ENCODE measurements at regions of chr3 and their contacts with region 1.

Region 1: DNA sequence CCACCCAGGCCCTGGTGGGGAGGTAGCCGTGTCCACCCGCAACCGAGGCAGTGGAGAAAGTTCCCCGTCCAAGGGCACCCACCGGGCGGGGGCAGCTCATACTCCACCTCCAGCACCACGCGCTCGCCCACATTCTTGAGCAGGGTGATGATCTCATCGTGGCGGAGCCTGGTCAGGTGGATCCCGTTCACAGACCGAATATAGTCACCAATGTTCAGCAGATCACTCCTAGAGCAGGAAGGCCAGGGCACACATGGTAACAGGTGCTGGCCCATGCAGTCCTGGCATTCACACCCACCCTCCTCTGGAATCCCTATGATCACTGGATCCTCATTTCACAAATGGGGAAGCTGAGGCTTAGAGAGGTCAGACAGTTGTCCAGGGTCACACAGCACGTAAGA is 15.8 kb downstream of the GRIP2 start:
- DNase-seq: peak; percentile 90 to 96
- ATAC-seq: peak; percentile 68 to 76
- H3K4me3 ChIP-seq: no peak overlapping the region
- H3K27ac ChIP-seq: peak overlapping the region; percentile 92 to 99 (median 97)
- H3K4me1 ChIP-seq: peaks cover 62 to 69% of the 10 kb centered on the region in 2 donors
- H3K27me3 ChIP-seq: no peaks in the 10 kb centered on the region
- CTCF ChIP-seq: no peak
- POLR2A ChIP-seq: peak; percentile 68 to 85

Region 2: GRCh38 chr3:14537590-14538447 is 13.5 kb after region 1 on chr3:
- in situ Hi-C with region 1: no loop called
- intact Hi-C with region 1: loop called (anchors 1 kb)
- DNase-seq: peak; percentile 61 to 93
- ATAC-seq: peak; percentile 25 to 49
- H3K4me3 ChIP-seq: peak overlapping the region; percentile 0 to 22 (median 21)
- H3K27ac ChIP-seq: peak overlapping the region; percentile 94 to 97 (median 94)
- H3K4me1 ChIP-seq: peaks cover 80 to 82% of the 10 kb centered on the region in 2 donors
- H3K27me3 ChIP-seq: no peaks in the 10 kb centered on the region
- CTCF ChIP-seq: no peak
- POLR2A ChIP-seq: peak; percentile 21 to 26

Measured in gastrocnemius medialis (tissue), 4 donors.